H1 (cell line): ENCODE measurements at regions of chr16 and their contacts with region 1.

Region 1: DNA sequence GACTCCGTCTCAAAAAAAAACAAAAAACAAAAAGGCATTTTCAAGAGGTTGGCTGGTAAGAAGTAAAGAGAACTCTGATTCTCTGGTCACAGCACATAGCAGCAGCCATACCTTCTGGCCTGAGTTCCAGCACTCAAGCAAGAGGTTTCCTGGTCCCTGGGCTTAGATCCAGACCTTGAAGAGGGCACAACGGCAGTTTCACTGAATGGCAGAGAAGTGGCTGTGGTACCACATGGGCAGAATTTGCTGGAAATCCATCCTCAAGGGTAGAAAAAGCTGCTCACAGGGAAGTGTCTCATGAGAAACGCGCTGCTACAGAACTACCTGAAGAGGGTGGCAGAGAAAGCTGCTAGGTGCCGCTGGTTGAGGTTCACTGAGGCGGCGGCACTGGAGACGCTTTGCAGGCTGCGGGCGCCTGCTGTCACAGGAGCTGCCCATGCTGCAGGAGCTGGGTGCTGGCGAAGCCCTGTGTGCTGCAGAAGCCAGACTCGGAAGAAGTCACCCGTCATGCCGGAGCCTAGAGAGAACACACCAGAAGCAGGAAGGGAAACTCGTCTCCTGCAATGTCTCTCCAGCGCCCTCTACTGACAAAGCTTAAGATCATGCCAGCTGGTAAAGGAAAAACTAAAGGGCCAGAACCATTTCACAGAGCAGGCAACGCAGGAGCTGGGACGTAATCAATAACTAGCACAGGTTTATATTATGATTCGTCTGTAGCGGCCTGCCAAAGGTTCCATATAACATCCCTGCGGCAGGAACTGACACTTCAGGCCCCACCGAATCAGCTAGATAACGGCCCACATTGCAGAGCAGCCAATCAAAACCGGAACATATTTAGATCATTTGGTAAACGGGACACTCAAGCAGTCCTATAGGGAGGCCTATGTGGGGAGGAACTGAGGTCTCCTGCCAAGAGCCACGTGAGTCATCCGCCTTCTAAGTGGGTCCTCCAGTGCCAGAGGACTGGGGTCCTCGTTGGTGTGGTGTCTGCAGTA is 5.4 kb upstream of the ZNF213 start:
- DNase-seq: peak; percentile 61 to 81
- H3K4me3 ChIP-seq: no peak overlapping the region
- H3K27ac ChIP-seq: no peak overlapping the region
- H3K4me1 ChIP-seq: peaks cover 0 to 12% (median 3%) of the 10 kb centered on the region in 4 experiments; a peak in 5 of 7 replicates
- H3K27me3 ChIP-seq: no peaks in the 10 kb centered on the region
- CTCF ChIP-seq: peak; percentile 50 to 92 (median 79)
- EP300 ChIP-seq: no peak
- POLR2A ChIP-seq: peak in 1 of 2 experiments; percentile 69; a peak in 2 of 3 replicates
- RAD21 ChIP-seq: peak; percentile 70 to 76

Region 2: GRCh38 chr16:3038256-3038655 is 91.2 kb before region 1 on chr16:
- CTCF ChIA-PET with region 1: interaction called, 41 read pairs
- POLR2A ChIA-PET with region 1: interaction called, 5 read pairs
- DNase-seq: peak in 1 of 2 experiments; percentile 63
- H3K4me3 ChIP-seq: no peak overlapping the region; a peak in 1 of 8 replicates
- H3K27ac ChIP-seq: no peak overlapping the region; the same call in 1 of the 2 replicates
- H3K4me1 ChIP-seq: peaks cover 3 to 19% (median 12%) of the 10 kb centered on the region in 4 experiments
- H3K27me3 ChIP-seq: peaks cover 0 to 11% (median 3%) of the 10 kb centered on the region in 4 experiments; a peak in 1 of 7 replicates
- CTCF ChIP-seq: no peak
- EP300 ChIP-seq: no peak
- POLR2A ChIP-seq: no peak
- RAD21 ChIP-seq: no peak

Region 3: GRCh38 chr16:3059000-3059722 is 70.3 kb before region 1 on chr16:
- CTCF ChIA-PET with region 1: interaction called, 76 read pairs
- POLR2A ChIA-PET with region 1: interaction called, 9 read pairs
- DNase-seq: peak; percentile 64 to 96
- H3K4me3 ChIP-seq: peak overlapping the region; percentile 39 to 86 (median 67)
- H3K27ac ChIP-seq: no peak overlapping the region
- H3K4me1 ChIP-seq: peaks cover 5 to 19% (median 6%) of the 10 kb centered on the region in 4 experiments; a peak in 6 of 7 replicates
- H3K27me3 ChIP-seq: no peaks in the 10 kb centered on the region; a peak in 1 of 7 replicates
- CTCF ChIP-seq: peak; percentile 79 to 99 (median 88)
- EP300 ChIP-seq: 0 out of 3 replicates have a peak, but pooled peaks of 1 of the 2 experiments have one; percentile 53
- POLR2A ChIP-seq: peak in 1 of 2 experiments; percentile 39; a peak in 1 of 3 replicates
- RAD21 ChIP-seq: peak; percentile 81 to 95

Region 4: GRCh38 chr16:3087243-3088235 is 41.9 kb before region 1 on chr16:
- CTCF ChIA-PET with region 1: interaction called, 619 read pairs
- POLR2A ChIA-PET with region 1: interaction called, 30 read pairs
- DNase-seq: no peak
- H3K4me3 ChIP-seq: no peak overlapping the region
- H3K27ac ChIP-seq: no peak overlapping the region; the same call in 1 of the 2 replicates
- H3K4me1 ChIP-seq: peaks cover 0 to 6% (median 5%) of the 10 kb centered on the region in 4 experiments; a peak in 6 of 7 replicates
- H3K27me3 ChIP-seq: no peaks in the 10 kb centered on the region
- CTCF ChIP-seq: peak; percentile 55 to 67 (median 65)
- EP300 ChIP-seq: no peak
- POLR2A ChIP-seq: peak in 1 of 2 experiments; percentile 72; a peak in 2 of 3 replicates
- RAD21 ChIP-seq: peak; percentile 25 to 51; a peak in 3 of 4 replicates

Region 5: GRCh38 chr16:3143612-3144320 is 14.3 kb after region 1 on chr16:
- CTCF ChIA-PET with region 1: interaction called, 174 read pairs
- POLR2A ChIA-PET with region 1: interaction called, 43 read pairs
- DNase-seq: no peak
- H3K4me3 ChIP-seq: no peak overlapping the region
- H3K27ac ChIP-seq: no peak overlapping the region
- H3K4me1 ChIP-seq: no peaks in the 10 kb centered on the region
- H3K27me3 ChIP-seq: peaks cover 0 to 14% (median 8%) of the 10 kb centered on the region in 4 experiments; a peak in 5 of 7 replicates
- CTCF ChIP-seq: no peak
- EP300 ChIP-seq: no peak
- POLR2A ChIP-seq: no peak
- RAD21 ChIP-seq: no peak

Region 6: DNA sequence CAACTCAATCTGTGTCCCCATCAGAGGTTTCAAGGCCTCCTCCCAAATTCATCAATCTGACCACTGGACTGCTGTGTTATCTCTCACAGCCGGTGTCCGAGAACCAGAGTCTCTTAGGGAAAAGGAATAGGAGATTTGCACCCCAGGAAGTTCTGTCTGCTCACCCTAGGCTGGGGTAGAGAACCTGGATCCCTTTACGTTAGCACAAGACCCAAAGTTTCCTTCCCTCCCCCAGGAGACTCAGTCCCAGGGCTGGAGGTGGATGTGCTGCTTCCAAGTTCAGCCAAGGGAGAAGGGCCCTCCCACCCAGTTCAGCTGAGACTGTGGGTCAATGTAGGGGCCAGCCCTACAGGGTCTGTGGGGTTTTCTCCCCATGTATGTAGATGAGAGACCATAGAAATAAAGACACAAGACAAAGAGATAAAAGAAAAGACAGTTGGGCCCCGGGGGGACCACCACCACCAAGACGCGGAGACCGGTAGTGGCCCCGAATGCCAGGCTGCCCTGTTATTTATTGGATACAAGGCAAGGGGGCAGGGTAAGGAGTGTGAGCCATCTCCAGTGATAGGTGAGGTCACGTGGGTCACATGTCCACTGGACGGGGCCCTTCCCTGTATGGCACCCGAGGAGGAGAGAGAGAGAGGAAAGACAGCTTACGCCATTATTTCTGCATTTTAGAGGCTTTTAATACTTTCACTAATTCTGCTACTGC is 35.8 kb after region 1 on chr16:
- CTCF ChIA-PET with region 1: interaction called, 18 read pairs
- POLR2A ChIA-PET with region 1: no interaction called
- DNase-seq: no peak
- H3K4me3 ChIP-seq: no peak overlapping the region
- H3K27ac ChIP-seq: no peak overlapping the region
- H3K4me1 ChIP-seq: 0 out of 7 replicates have a peak, but pooled peaks cover 0 to 3% (median 0%) of the 10 kb centered on the region in 4 experiments
- H3K27me3 ChIP-seq: peaks cover 0 to 12% (median 4%) of the 10 kb centered on the region in 4 experiments; a peak in 5 of 7 replicates
- CTCF ChIP-seq: no peak
- EP300 ChIP-seq: no peak
- POLR2A ChIP-seq: no peak
- RAD21 ChIP-seq: no peak